CD4-positive, alpha-beta memory T cell (primary cell): ENCODE measurements at regions of chr3 and their contacts with region 1.

Region 1: DNA sequence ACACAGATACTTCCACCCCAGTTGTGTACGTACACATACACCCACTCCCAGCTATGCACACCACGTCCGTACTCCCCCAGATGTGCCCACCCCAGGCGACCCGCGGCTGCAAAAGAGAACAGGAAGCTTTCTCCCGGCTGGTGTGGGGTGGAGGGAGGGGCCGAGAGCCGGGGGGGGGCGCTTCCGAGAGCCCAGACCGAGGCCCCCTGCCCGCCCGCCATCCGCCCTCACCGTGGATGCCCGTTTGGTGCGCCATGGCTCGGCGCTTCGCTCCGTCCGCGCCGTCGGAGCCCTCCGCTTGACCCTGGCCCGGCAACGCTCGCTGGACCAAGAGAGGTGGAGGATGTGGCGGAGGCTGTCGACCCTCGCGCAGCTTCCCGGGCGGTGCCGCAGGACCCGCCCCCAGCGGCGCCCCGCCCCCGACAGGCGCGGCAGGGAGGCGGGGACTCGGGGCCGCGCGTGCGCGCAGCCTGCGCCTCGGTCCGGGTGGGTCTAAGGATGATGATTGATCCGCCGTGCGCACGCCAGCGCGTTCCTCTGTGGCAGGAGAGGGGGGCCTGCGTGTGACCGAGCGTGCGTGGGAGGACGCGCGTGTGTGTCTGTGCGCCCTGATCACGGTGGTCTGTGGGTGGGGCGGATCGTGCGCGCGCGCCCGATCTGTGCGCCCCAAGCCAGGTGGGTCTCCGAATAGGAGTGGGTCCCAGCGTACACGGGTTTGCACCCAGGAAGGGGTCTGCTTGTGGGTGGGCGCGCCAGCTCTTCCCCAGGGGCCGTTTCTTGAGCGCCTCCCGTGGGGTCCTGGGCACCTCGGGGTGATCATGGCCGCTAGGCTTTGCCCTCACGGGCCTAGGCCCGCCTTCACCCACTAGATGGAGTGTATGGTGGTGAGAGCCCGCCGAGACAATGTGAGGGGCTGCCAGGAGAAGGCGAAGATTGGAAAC is at the start of gene TWF2:
- DNase-seq: peak; percentile 88 to 93 (median 89)
- H3K4me3 ChIP-seq: peak within 1 kb of the TSS; percentile 83 to 93
- H3K4me3 Mint-ChIP-seq: peak within 1 kb of the TSS; percentile 93 to 99 (median 98)
- H3K27ac ChIP-seq: peak within 1 kb of the TSS; percentile 92
- H3K27ac Mint-ChIP-seq: peak within 1 kb of the TSS; percentile 82 to 98 (median 95)
- H3K4me1 ChIP-seq: peaks cover 79% of the 10 kb centered on the region
- H3K4me1 Mint-ChIP-seq: peaks cover 43 to 92% (median 68%) of the 10 kb centered on the region in 4 donors
- H3K27me3 ChIP-seq: no peaks in the 10 kb centered on the region
- H3K27me3 Mint-ChIP-seq: no peaks in the 10 kb centered on the region
- total RNA-seq, gene TWF2: 69.3 to 76.1 TPM

Region 2: GRCh38 chr3:52225452-52226228 is 13.4 kb before region 1 on chr3 and contains the start of gene TLR9:
- CTCF ChIA-PET with region 1: interaction called, 179 read pairs
- POLR2A ChIA-PET with region 1: interaction called, 23 read pairs
- intact Hi-C with region 1: loop called (anchors 2 kb)
- DNase-seq: no peak
- H3K4me3 ChIP-seq: no peak within 1 kb of the TSS
- H3K4me3 Mint-ChIP-seq: peak within 1 kb of the TSS in 7 of 8 donors; percentile 26 to 65 (median 54)
- H3K27ac ChIP-seq: peak within 1 kb of the TSS; percentile 4
- H3K27ac Mint-ChIP-seq: peak within 1 kb of the TSS; percentile 64 to 93 (median 90)
- H3K4me1 ChIP-seq: peaks cover 61% of the 10 kb centered on the region
- H3K4me1 Mint-ChIP-seq: peaks cover 32 to 75% (median 58%) of the 10 kb centered on the region in 4 donors
- H3K27me3 ChIP-seq: no peaks in the 10 kb centered on the region
- H3K27me3 Mint-ChIP-seq: no peaks in the 10 kb centered on the region
- total RNA-seq, gene TLR9: 2.3 to 3.0 TPM

Region 3: DNA sequence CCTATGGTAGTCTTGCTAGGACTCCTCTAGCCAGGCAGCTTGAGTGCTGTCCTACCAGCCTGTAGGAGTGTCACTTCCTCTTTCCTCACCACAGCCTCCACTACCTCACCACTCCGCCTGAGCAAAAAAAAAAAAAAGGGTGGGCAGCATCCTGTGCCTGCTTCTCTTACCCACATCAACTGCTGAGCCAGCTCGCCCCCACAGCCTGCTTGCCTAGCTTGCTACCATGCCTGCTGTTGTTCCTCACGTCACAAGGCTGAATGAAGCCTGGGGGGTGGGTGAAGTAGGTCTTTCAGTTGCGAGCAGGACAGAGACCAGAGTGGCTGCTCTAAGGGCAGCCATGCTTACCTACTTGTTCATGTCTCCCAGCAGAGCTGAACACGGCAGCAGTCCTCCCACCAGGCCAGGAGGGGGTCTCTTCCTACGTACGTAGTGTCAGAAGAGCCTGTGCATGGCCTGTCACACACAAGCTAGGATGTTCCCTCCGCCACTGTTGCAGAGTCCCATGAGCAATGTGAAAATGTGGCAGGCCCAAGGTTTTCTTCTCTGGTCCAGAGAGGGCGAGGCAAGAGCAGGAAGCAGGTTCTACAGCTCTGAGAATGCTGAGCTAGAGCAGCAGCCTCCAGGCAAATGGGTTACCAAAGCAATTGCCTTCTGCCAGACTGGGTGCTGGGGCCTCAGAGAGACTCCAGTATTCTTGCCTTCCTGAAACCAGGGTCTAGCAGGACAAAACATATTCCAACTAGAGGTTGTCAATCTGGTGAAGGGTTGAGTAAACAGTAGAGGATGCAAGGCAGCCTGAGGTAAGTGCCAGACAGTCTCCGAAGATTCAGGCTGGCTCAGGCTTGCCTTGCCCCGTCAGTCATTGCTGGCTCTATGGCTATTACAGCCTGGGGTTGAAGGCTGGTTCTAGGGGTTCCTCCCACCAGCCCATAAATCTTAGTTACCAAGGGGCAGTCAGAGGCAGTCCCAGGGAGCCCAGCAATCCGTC is 14.6 kb after region 1 on chr3:
- CTCF ChIA-PET with region 1: interaction called, 74 read pairs
- POLR2A ChIA-PET with region 1: interaction called, 214 read pairs
- intact Hi-C with region 1: loop called (anchors 1 kb)
- DNase-seq: peak; percentile 90 to 97 (median 93)
- H3K4me3 ChIP-seq: peak overlapping the region; percentile 10 to 16
- H3K4me3 Mint-ChIP-seq: peak overlapping the region; percentile 85 to 97 (median 90)
- H3K27ac ChIP-seq: peak overlapping the region; percentile 86
- H3K27ac Mint-ChIP-seq: peak overlapping the region; percentile 97 to 100 (median 100)
- H3K4me1 ChIP-seq: peaks cover 99% of the 10 kb centered on the region
- H3K4me1 Mint-ChIP-seq: peaks cover 54 to 99% (median 82%) of the 10 kb centered on the region in 4 donors
- H3K27me3 ChIP-seq: no peaks in the 10 kb centered on the region
- H3K27me3 Mint-ChIP-seq: no peaks in the 10 kb centered on the region

Region 4: GRCh38 chr3:52259035-52259434 is 20.0 kb after region 1 on chr3:
- CTCF ChIA-PET with region 1: interaction called, 684 read pairs
- POLR2A ChIA-PET with region 1: interaction called, 1,950 read pairs
- intact Hi-C with region 1: no loop called
- DNase-seq: no peak
- H3K4me3 ChIP-seq: no peak overlapping the region
- H3K4me3 Mint-ChIP-seq: no peak overlapping the region
- H3K27ac ChIP-seq: peak overlapping the region; percentile 45
- H3K27ac Mint-ChIP-seq: peak overlapping the region; percentile 49 to 97 (median 83)
- H3K4me1 ChIP-seq: peaks cover 97% of the 10 kb centered on the region
- H3K4me1 Mint-ChIP-seq: peaks cover 57 to 98% (median 83%) of the 10 kb centered on the region in 4 donors
- H3K27me3 ChIP-seq: no peaks in the 10 kb centered on the region
- H3K27me3 Mint-ChIP-seq: no peaks in the 10 kb centered on the region

Region 5: GRCh38 chr3:52278510-52279069 is 39.6 kb after region 1 on chr3 and contains the start of gene WDR82:
- CTCF ChIA-PET with region 1: interaction called, 684 read pairs
- POLR2A ChIA-PET with region 1: interaction called, 1,950 read pairs
- intact Hi-C with region 1: loop called (anchors 1 kb)
- DNase-seq: peak; percentile 94 to 97 (median 95)
- H3K4me3 ChIP-seq: peak within 1 kb of the TSS; percentile 58 to 71
- H3K4me3 Mint-ChIP-seq: peak within 1 kb of the TSS; percentile 92 to 99 (median 98)
- H3K27ac ChIP-seq: peak within 1 kb of the TSS; percentile 87
- H3K27ac Mint-ChIP-seq: peak within 1 kb of the TSS; percentile 96 to 100 (median 100)
- H3K4me1 ChIP-seq: peaks cover 76% of the 10 kb centered on the region
- H3K4me1 Mint-ChIP-seq: peaks cover 40 to 87% (median 56%) of the 10 kb centered on the region in 4 donors
- H3K27me3 ChIP-seq: no peaks in the 10 kb centered on the region
- H3K27me3 Mint-ChIP-seq: peaks cover 0 to 3% of the 10 kb centered on the region in 2 donors
- total RNA-seq, gene WDR82: 149 to 150 TPM

Region 6: DNA sequence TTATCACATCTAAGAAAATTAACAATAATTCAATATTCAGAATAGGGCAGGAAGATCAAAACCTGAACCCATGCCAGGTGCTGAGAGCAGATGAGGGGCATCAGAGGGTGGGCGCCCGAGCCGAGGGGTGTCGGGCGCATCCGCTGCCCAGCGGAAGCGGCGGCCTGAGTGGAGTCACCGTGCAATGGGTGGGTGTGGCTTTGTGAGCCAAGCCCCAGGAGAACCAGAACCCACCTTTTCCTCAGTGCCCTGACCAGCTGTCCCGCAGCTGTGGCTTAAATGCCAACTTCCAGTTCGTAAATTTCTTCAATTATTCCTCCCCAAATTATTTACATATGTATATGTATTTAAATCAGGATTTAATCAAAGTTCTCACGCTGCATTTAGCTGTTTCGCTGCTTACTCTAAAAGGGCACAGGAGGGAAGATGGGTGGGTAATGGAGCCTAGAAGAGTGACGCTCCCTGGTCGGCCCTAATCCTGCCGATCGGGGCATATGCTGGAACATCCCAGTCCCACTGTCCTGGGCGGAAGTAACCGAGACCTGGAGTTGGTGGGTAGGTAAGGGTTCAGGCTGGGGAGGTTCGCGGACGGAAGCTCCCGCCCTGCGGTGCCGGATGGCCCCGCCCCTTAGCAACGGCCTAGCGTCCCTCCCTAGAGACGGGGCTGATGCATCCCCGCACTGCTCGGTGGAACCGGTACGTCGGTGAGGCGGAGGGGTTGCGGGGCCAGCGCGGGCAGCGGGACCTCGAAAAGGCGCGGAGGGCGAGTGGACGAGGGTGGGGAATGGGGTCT is 78.4 kb after region 1 on chr3:
- CTCF ChIA-PET with region 1: interaction called, 4 read pairs
- POLR2A ChIA-PET with region 1: interaction called, 17 read pairs
- intact Hi-C with region 1: loop called (anchors 1 kb)
- DNase-seq: peak; percentile 71 to 77 (median 74)
- H3K4me3 ChIP-seq: peak overlapping the region in 1 of 2 donors; percentile 31
- H3K4me3 Mint-ChIP-seq: peak overlapping the region; percentile 34 to 78 (median 65)
- H3K27ac ChIP-seq: peak overlapping the region; percentile 23
- H3K27ac Mint-ChIP-seq: peak overlapping the region; percentile 10 to 87 (median 82)
- H3K4me1 ChIP-seq: peaks cover 16% of the 10 kb centered on the region
- H3K4me1 Mint-ChIP-seq: peaks cover 9 to 30% (median 15%) of the 10 kb centered on the region in 4 donors
- H3K27me3 ChIP-seq: no peaks in the 10 kb centered on the region
- H3K27me3 Mint-ChIP-seq: no peaks in the 10 kb centered on the region